ENCODE measurements at regions of chr19 and their contacts with region 1.

Region 1: GRCh38 chr19:18588611-18589379 is at the start of gene REX1BD:
- DNase-seq: peak in 1 of 2 experiments; percentile 83
- ATAC-seq: peak; percentile 75 to 85
- H3K4me3 ChIP-seq: peak within 1 kb of the TSS; percentile 96
- H3K27ac ChIP-seq: peak within 1 kb of the TSS; percentile 100
- H3K4me1 ChIP-seq: peaks cover 9% of the 10 kb centered on the region; the same call in 1 of the 3 replicates
- CTCF ChIP-seq: peak; percentile 74
- EP300 ChIP-seq: no peak
- POLR2A ChIP-seq: peak; percentile 80
- RAD21 ChIP-seq: no peak; a peak in 1 of 5 replicates
- polyA plus RNA-seq, gene REX1BD: 13.3 and 23.1 TPM in 2 replicates

Region 2: GRCh38 chr19:18571564-18572300 is 17.1 kb before region 1 on chr19 and contains the start of gene UBA52:
- CTCF ChIA-PET with region 1: interaction called, 22 read pairs
- POLR2A ChIA-PET with region 1: interaction called, 31 read pairs
- DNase-seq: peak; percentile 69 to 97
- ATAC-seq: peak; percentile 96 to 98
- H3K4me3 ChIP-seq: peak within 1 kb of the TSS; percentile 87
- H3K27ac ChIP-seq: peak within 1 kb of the TSS; percentile 86 to 95
- H3K4me1 ChIP-seq: peaks cover 19% of the 10 kb centered on the region
- CTCF ChIP-seq: no peak
- EP300 ChIP-seq: no peak
- POLR2A ChIP-seq: peak; percentile 72
- RAD21 ChIP-seq: no peak
- polyA plus RNA-seq, gene UBA52: 888 and 1,266 TPM in 2 replicates

Measured in A549 (cell line).